ENCODE measurements at regions of chr5 and their contacts with region 1.

Region 1: GRCh38 chr5:116522356-116523136 is 52.1 kb downstream of the SEMA6A start:
- DNase-seq: no peak
- H3K4me3 ChIP-seq: no peak overlapping the region
- H3K27ac ChIP-seq: no peak overlapping the region
- H3K4me1 ChIP-seq: peaks cover 33 to 84% (median 50%) of the 10 kb centered on the region in 4 donors
- H3K27me3 ChIP-seq: no peaks in the 10 kb centered on the region
- CTCF ChIP-seq: no peak
- EP300 ChIP-seq: no peak
- POLR2A ChIP-seq: no peak

Region 2: DNA sequence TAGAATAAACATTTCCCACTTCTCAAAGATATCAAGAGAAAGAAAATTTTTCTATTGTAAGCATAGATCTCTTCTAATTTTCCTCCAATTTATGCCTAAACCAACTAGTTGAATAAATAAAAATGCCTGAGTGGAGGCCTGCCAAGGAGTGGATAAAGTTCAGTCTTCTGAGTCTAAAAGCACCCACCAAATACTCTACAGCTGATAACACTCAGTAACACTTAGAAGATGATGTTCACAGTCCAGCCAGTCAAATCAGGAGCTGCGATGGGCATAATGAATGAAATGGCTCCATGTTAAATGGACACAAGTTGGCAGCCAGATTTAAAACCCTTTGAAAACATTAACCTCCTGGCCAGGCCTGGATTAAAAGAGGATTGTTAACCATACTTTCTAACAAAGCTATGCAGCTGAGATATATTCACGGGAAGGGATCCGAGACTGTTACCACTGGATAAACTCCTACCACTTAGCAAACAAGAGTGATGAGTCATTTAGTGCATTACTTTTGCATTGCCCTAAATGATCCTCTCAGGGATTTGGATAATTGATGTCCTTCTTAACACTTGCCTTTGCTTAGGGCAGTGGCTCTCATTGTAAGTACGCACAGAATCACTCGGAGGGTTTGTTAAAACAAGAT is 1162.4 kb before region 1 on chr5:
- in situ Hi-C with region 1: no loop called
- intact Hi-C with region 1: no loop called
- DNase-seq: no peak
- H3K4me3 ChIP-seq: no peak overlapping the region
- H3K27ac ChIP-seq: no peak overlapping the region
- H3K4me1 ChIP-seq: peaks cover 0 to 8% (median 0%) of the 10 kb centered on the region in 4 donors
- H3K27me3 ChIP-seq: no peaks in the 10 kb centered on the region
- CTCF ChIP-seq: no peak
- EP300 ChIP-seq: no peak
- POLR2A ChIP-seq: no peak

Region 3: GRCh38 chr5:116480894-116481510 is 41.5 kb before region 1 on chr5:
- in situ Hi-C with region 1: no loop called
- intact Hi-C with region 1: loop called (anchors 1 kb)
- DNase-seq: no peak
- H3K4me3 ChIP-seq: no peak overlapping the region
- H3K27ac ChIP-seq: no peak overlapping the region
- H3K4me1 ChIP-seq: no peaks in the 10 kb centered on the region
- H3K27me3 ChIP-seq: no peaks in the 10 kb centered on the region
- CTCF ChIP-seq: no peak
- EP300 ChIP-seq: no peak
- POLR2A ChIP-seq: no peak

Measured in transverse colon (tissue), 4 donors.